ENCODE measurements at regions of chr22 and their contacts with region 1.

Region 1: DNA sequence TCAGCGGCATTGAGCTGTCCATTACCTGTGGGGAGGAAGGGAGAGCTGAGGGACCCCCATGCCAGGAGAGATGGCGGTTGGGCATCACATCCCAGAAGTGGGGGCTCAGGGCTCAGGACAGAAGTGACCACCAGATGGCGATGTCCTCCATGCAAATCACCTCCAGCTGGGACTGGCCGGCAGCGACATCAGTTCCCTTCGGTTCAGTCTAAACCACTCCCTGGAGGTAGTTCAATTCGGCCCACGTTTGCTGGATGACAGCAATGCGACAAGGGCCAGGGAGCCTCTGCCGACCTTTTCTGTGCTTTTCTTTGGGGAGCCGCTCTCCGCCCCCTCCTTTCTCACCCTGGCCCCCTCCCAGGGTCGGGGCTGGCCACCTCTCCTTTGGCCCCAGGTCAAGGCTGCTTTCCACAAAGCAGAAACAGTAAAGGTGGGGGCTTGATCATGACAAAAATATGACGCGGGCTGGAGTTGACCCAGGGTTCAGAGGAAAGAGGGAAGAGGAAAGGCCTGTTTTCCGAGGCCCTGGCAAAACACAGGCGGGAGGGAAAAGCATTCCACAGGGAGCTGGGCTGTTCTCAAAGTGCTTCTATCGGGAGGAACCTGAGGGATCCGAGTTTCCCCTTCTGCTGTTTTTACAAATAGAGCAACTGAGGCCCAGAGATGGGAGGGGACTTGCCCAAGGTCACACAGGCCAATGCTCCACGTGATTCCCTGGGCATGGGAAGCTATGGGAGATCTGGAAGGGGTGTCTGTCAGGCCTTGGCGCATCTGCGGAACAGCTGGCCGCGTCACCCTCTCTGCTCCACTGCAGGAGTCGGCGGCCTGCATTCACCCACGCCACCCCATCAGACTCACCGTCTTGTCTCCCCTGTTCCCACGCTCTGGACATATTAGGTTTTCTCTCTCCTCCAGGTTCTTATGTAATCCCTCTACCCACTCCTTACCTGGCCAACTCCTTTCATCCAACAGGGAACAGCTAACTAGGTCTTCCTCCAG is 54.7 kb downstream of the FBXO7 start:
- DNase-seq: peak; percentile 87
- H3K4me3 ChIP-seq: no peak overlapping the region
- H3K27ac ChIP-seq: peak overlapping the region; percentile 41 to 47
- H3K4me1 ChIP-seq: peaks cover 3% of the 10 kb centered on the region
- H3K27me3 ChIP-seq: no peaks in the 10 kb centered on the region
- CTCF ChIP-seq: peak; percentile 78 to 94 (median 89)
- POLR2A ChIP-seq: no peak

Region 2: DNA sequence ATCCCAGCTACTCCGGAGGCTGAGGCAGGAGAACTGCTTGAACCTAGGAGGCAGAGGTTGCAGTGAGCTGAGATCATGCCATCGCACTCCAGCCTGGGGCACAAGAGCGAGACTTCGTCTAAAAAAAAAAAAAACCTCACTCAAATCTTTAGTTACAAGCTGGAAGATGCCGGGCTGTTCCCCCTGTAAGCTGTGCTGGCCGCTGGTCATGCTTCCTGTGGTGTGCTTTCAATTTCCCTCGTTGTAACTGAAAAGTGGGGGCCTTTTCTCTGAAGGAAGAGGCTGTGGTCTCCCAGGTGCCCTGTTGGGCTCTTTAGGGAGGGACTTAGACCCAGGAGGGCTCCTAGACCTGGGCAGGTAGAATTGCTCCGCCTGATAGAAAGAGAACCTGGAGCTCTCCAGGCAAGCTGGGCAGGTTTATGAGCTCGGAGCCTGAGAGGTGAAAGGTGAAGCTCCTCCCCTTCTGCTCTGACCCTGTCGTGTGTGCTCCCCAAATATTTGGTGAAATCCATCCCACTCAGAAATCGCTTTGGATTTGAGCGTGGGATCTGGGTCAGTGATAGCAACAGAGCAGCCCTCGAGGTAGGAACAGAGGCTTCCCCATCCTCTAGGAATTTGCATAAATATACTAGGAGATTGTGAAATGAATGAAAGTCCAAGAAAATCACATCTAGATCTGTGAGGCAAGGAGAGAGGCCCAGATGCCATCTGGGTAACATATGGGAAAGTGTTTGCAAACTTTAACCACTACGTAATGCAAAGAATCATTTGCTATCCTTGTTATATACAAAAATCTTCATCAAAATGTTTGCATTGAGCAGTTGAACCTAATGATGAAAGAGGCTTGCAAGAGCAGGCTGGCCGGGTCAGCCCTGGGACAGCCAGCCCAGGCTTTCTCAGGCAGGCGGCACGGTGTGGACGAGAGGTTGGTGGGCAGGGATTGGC is 99.6 kb after region 1 on chr22:
- intact Hi-C with region 1: loop called (anchors 5 kb)
- DNase-seq: no peak
- H3K4me3 ChIP-seq: no peak overlapping the region
- H3K27ac ChIP-seq: peak overlapping the region; percentile 42 to 62
- H3K4me1 ChIP-seq: no peaks in the 10 kb centered on the region
- H3K27me3 ChIP-seq: no peaks in the 10 kb centered on the region
- CTCF ChIP-seq: no peak
- POLR2A ChIP-seq: no peak

Region 3: DNA sequence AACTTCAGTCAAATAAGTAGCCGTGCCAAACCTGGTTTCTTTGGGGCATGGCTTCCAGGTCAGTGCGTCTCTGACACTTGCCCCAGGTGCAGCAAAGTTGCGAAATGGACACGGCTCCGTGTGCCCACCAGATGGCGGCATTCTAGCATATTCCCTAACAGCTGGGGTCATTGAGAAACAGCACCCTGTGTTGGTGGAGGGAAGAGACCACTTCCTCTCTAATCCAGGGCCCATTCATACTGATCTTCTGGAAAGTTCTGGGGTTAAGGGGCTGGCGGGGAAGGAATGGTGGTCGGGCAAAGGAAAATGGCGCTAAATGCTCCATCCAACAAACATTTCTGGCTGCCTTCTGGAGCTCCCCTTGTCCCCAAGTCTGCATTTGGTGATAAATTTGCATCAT is 131.0 kb after region 1 on chr22:
- intact Hi-C with region 1: loop called (anchors 5 kb)
- DNase-seq: peak; percentile 54
- H3K4me3 ChIP-seq: no peak overlapping the region
- H3K27ac ChIP-seq: no peak overlapping the region
- H3K4me1 ChIP-seq: no peaks in the 10 kb centered on the region
- H3K27me3 ChIP-seq: no peaks in the 10 kb centered on the region
- CTCF ChIP-seq: peak; percentile 55 to 81 (median 77)
- POLR2A ChIP-seq: no peak

Region 4: DNA sequence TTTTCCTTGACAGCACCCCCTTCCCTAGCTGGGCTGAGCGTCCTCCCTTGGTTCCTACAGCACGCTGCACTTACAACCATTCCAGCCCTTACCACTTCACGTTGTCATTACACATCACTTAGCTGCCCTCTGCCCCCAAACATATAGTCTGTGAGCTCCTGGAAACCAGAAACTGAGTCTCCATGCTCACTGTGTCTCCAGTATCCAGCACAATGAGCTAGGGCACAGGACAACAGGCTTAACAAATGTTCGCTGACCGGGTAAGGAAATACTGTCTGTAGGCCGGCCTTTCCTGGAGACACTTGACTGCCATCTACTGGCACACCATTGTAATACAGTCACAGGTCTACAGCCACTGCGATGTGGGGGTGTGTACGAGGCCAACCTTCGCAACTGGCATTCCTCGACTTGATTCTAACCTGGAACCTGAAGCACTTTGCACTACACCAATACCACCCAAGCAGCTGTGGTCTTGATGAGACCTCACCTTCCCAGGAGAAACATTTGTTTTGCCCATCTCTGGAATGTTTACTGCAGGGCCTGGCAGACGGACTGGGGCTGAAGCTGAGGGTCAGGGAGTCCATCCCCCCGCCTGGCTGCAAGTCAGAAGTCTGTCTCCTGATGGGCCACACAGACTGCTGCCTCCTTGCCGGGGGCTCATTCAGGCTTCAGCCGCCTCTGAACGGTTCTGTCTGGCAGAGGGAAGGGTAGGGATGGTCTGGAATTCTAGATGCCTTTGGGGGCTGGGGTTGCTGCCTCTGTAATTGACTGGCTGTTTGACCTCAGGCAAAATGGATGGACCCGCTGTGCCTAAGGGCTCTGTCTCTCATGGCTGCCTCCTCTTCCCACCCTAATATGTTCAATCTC is 456.8 kb after region 1 on chr22:
- intact Hi-C with region 1: loop called (anchors 2 kb)
- DNase-seq: peak; percentile 77
- H3K4me3 ChIP-seq: no peak overlapping the region
- H3K27ac ChIP-seq: peak overlapping the region in 1 of 2 donors; percentile 36
- H3K4me1 ChIP-seq: no peaks in the 10 kb centered on the region
- H3K27me3 ChIP-seq: no peaks in the 10 kb centered on the region
- CTCF ChIP-seq: peak; percentile 75 to 89 (median 82)
- POLR2A ChIP-seq: no peak

Measured in prostate gland (tissue), 2 donors.